ENCODE measurements at regions of chr12 and their contacts with region 1.

Region 1: GRCh38 chr12:4908684-4909409 is 858 bp upstream of the KCNA1 start:
- DNase-seq: peak; percentile 85
- ATAC-seq: peak; percentile 96
- H3K4me3 Mint-ChIP-seq: peak overlapping the region; percentile 78
- H3K27ac Mint-ChIP-seq: no peak overlapping the region
- H3K4me1 Mint-ChIP-seq: peaks cover 13% of the 10 kb centered on the region
- H3K27me3 Mint-ChIP-seq: peaks cover 1% of the 10 kb centered on the region; the same call in 1 of the 2 replicates
- CTCF ChIP-seq: no peak

Region 2: DNA sequence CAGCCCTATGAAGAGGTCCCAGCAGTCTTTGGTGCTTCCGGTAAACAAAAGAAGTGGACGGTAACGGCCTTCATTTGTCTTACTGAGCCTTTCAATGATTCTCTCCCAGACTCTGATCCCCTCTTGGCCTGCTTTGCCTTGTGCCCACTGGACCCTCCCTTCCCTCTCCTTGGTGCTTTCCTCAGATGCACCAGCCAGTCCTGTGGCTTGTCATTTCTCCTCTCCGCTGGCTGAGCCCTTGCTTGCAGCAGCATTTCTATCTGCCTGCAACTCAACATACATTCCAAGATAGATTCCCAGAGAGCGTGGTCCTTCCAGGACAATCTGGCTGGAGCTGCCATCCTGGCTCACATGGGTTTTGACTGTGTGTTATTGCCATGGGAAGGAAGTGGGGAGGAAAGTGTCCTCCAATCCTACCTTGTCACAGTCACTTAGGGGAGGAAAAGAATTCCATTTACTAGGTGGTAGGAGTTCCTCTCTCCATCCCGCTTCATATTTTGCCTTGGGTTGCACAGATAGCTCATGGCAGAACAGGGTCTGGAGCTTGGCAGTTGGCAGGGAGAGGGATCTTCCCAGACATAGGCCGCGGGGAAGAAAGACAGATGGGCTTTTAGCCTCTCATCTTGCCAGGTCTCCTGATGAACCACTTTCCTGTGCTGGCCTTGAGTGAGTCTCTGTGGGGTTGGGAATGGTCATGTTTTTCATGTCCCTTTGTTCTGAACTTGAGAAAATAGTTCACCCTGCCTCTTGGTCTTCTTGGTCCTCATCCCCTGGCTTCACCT is 91.9 kb before region 1 on chr12:
- CTCF ChIA-PET with region 1: no interaction called
- POLR2A ChIA-PET with region 1: no interaction called
- DNase-seq: no peak
- ATAC-seq: no peak
- H3K4me3 Mint-ChIP-seq: no peak overlapping the region
- H3K27ac Mint-ChIP-seq: no peak overlapping the region
- H3K4me1 Mint-ChIP-seq: peaks cover 9% of the 10 kb centered on the region
- H3K27me3 Mint-ChIP-seq: peaks cover 26% of the 10 kb centered on the region
- CTCF ChIP-seq: no peak

Region 3: GRCh38 chr12:4881266-4882064 is 27.4 kb before region 1 on chr12:
- CTCF ChIA-PET with region 1: no interaction called
- POLR2A ChIA-PET with region 1: no interaction called
- DNase-seq: no peak
- ATAC-seq: no peak
- H3K4me3 Mint-ChIP-seq: no peak overlapping the region
- H3K27ac Mint-ChIP-seq: no peak overlapping the region
- H3K4me1 Mint-ChIP-seq: no peaks in the 10 kb centered on the region
- H3K27me3 Mint-ChIP-seq: peaks cover 55% of the 10 kb centered on the region
- CTCF ChIP-seq: no peak

Region 4: GRCh38 chr12:4918950-4919660 is 10.3 kb after region 1 on chr12:
- CTCF ChIA-PET with region 1: interaction called, 12 read pairs
- POLR2A ChIA-PET with region 1: no interaction called
- DNase-seq: no peak
- ATAC-seq: no peak
- H3K4me3 Mint-ChIP-seq: no peak overlapping the region
- H3K27ac Mint-ChIP-seq: no peak overlapping the region
- H3K4me1 Mint-ChIP-seq: no peaks in the 10 kb centered on the region
- H3K27me3 Mint-ChIP-seq: peaks cover 39% of the 10 kb centered on the region
- CTCF ChIP-seq: no peak

Region 5: DNA sequence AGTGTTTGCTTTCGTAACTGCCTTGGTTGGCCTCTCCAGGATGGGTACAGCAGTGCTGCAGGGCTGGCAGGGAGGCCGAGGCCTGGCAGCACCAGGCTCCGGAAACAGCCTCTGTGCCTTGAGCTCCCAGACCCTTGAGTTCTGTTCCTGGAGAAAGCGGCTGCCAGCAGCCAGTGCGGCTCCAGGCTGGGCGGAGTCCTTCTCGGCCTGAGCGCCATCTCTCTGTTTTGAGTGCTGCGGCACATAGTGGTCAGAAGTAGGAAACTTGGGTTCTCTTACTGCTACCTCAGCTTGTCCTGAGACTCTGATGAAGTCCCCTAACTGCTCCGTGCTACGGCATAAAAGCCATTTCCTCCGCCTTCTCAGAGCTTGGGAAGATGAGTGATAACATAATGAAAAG is 66.7 kb after region 1 on chr12:
- CTCF ChIA-PET with region 1: interaction called, 10 read pairs
- POLR2A ChIA-PET with region 1: interaction called, 3 read pairs
- DNase-seq: peak; percentile 42
- ATAC-seq: peak; percentile 87
- H3K4me3 Mint-ChIP-seq: no peak overlapping the region
- H3K27ac Mint-ChIP-seq: no peak overlapping the region
- H3K4me1 Mint-ChIP-seq: peaks cover 11% of the 10 kb centered on the region; the same call in 1 of the 2 replicates
- H3K27me3 Mint-ChIP-seq: peaks cover 4% of the 10 kb centered on the region; the same call in 1 of the 2 replicates
- CTCF ChIP-seq: no peak

Region 6: GRCh38 chr12:4997939-4998338 is 89.1 kb after region 1 on chr12:
- CTCF ChIA-PET with region 1: interaction called, 10 read pairs
- POLR2A ChIA-PET with region 1: no interaction called
- DNase-seq: no peak
- ATAC-seq: no peak
- H3K4me3 Mint-ChIP-seq: no peak overlapping the region
- H3K27ac Mint-ChIP-seq: no peak overlapping the region
- H3K4me1 Mint-ChIP-seq: peaks cover 8% of the 10 kb centered on the region
- H3K27me3 Mint-ChIP-seq: no peaks in the 10 kb centered on the region; the same call in 1 of the 2 replicates
- CTCF ChIP-seq: no peak

Measured in WTC11 (cell line).